T-cell (primary cell): ENCODE measurements at regions of chr3 and their contacts with region 1.

Region 1: DNA sequence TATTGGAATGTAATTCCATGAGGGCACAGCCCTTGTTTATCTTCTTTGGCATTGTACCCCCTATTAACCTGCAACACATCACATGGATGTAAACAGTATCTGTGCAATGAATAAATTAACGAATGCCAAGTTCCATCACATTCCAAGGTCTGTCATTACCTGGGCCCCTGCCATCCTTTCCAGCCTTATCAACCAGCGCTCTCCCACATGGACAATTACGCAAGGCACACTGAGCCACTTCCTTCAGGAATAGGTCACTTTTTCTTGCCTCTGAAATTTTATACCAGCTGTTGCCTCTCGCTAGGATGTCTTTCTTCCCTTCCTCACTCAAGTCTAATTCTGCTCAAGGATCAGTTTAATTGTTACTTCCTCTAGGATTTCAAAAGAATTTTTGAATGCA is 1051.8 kb upstream of the CFAP20DC start:
- DNase-seq: no peak
- ATAC-seq: no peak
- H3K4me3 ChIP-seq: no peak overlapping the region
- H3K4me3 Mint-ChIP-seq: no peak overlapping the region
- H3K27ac ChIP-seq: no peak overlapping the region
- H3K27ac Mint-ChIP-seq: no peak overlapping the region
- H3K4me1 ChIP-seq: peaks cover 0 to 10% of the 10 kb centered on the region in 2 experiments
- H3K4me1 Mint-ChIP-seq: peaks cover 17 to 31% (median 22%) of the 10 kb centered on the region in 3 donors
- H3K27me3 ChIP-seq: no peaks in the 10 kb centered on the region
- H3K27me3 Mint-ChIP-seq: no peaks in the 10 kb centered on the region

Region 2: DNA sequence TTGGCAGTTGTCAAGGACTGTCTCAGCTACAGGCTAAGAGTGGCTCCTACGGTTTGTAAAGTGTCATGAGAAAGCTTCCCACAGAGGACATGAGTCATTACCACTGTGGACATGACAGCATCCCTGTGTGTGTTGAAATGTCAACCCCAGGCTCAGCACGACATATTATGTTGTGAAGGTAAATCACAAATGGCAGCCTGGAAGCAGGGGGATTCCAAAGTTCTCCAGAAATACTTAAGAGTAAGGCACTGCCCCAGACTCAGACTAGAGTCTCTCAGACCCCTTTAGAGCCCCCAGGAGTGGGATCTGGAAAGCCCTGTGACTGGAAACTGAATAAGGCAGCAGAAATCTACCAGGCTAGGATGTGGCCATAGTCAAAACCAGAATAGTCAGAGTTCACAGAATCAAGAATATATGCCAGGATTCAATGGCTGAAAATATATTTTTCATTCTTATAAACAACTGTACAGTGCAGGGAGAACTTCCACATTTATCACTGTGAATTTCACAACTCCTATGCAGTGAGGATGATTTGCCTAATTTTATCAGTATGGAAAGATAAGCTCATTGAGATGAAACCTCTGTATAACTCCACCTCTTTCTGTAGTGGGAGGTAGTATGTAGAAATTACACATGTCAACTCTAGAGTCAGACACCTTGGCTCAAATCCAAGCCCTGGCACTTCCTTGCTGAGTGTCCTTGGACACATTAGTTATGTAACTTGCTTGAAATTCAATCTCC is 814.7 kb before region 1 on chr3:
- CTCF ChIA-PET with region 1: no interaction called
- POLR2A ChIA-PET with region 1: no interaction called
- DNase-seq: peak in 3 of 35 experiments; percentile 2 to 26 (median 3)
- ATAC-seq: no peak
- H3K4me3 ChIP-seq: no peak overlapping the region
- H3K4me3 Mint-ChIP-seq: no peak overlapping the region
- H3K27ac ChIP-seq: no peak overlapping the region
- H3K27ac Mint-ChIP-seq: no peak overlapping the region
- H3K4me1 ChIP-seq: no peaks in the 10 kb centered on the region
- H3K4me1 Mint-ChIP-seq: peaks cover 3 to 12% (median 6%) of the 10 kb centered on the region in 3 donors
- H3K27me3 ChIP-seq: peaks cover 0 to 4% of the 10 kb centered on the region in 2 experiments
- H3K27me3 Mint-ChIP-seq: peaks cover 0 to 4% of the 10 kb centered on the region in 2 donors

Region 3: DNA sequence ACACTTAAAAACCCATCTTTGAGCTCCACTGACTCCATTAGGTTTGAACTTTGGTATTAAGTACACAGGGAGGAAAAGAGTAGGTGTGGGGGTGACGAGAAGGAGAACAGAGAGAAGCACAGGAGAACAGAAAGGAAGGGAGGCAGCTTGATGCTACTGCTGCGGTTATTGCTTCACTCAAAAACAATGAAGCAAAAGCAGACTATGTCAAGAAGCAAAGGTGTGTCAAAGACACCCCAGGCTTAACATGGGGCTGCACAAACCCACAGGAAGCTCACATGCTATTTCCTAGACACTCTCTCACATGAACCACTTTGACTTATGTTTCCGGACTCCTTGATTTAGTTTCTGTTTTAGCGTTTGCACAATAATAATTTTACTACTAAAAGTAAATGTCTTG is 90.8 kb before region 1 on chr3:
- CTCF ChIA-PET with region 1: no interaction called
- POLR2A ChIA-PET with region 1: interaction called in 1 of 2 experiments, 10 read pairs
- DNase-seq: peak; percentile 14 to 89 (median 66)
- ATAC-seq: peak; percentile 97 to 98 (median 98)
- H3K4me3 ChIP-seq: peak overlapping the region; percentile 20 to 54
- H3K4me3 Mint-ChIP-seq: peak overlapping the region; percentile 66 to 72 (median 72)
- H3K27ac ChIP-seq: peak overlapping the region; percentile 82
- H3K27ac Mint-ChIP-seq: peak overlapping the region; percentile 97 to 98
- H3K4me1 ChIP-seq: peaks cover 48 to 87% of the 10 kb centered on the region in 2 experiments
- H3K4me1 Mint-ChIP-seq: peaks cover 82 to 91% (median 89%) of the 10 kb centered on the region in 3 donors
- H3K27me3 ChIP-seq: no peaks in the 10 kb centered on the region
- H3K27me3 Mint-ChIP-seq: no peaks in the 10 kb centered on the region

Region 4: DNA sequence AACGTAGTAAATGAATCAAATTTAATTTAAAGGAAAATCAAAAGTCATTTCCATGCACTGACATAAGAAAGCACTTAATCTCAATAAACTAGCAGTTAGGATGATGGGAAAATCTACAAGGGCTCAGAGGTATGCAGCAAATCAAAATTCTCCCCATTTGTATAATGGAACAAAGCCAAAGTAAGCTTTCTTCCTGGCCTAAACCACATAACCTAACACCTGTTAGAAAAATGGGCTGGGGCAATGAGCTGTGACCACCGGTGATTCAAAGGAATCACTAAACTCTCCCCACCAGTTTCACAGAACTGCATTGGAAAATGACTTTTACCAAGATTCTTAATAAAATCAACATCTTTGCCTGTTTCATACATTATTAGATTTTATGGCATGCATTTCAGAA is 125.3 kb after region 1 on chr3:
- CTCF ChIA-PET with region 1: no interaction called
- POLR2A ChIA-PET with region 1: no interaction called
- DNase-seq: no peak
- ATAC-seq: no peak
- H3K4me3 ChIP-seq: no peak overlapping the region
- H3K4me3 Mint-ChIP-seq: no peak overlapping the region
- H3K27ac ChIP-seq: no peak overlapping the region
- H3K27ac Mint-ChIP-seq: no peak overlapping the region
- H3K4me1 ChIP-seq: no peaks in the 10 kb centered on the region
- H3K4me1 Mint-ChIP-seq: peaks cover 0 to 2% (median 0%) of the 10 kb centered on the region in 3 donors
- H3K27me3 ChIP-seq: no peaks in the 10 kb centered on the region
- H3K27me3 Mint-ChIP-seq: no peaks in the 10 kb centered on the region